CD4-positive, alpha-beta memory T cell (primary cell): ENCODE measurements at regions of chr7 and their contacts with region 1.

Region 1: GRCh38 chr7:135170274-135170997 is at the start of gene CYREN:
- DNase-seq: peak; percentile 79 to 88 (median 84)
- H3K4me3 ChIP-seq: peak within 1 kb of the TSS; percentile 19 to 79
- H3K4me3 Mint-ChIP-seq: peak within 1 kb of the TSS; percentile 89 to 95 (median 90)
- H3K27ac ChIP-seq: peak within 1 kb of the TSS; percentile 93
- H3K27ac Mint-ChIP-seq: peak within 1 kb of the TSS; percentile 94 to 97 (median 97)
- H3K4me1 ChIP-seq: peaks cover 43% of the 10 kb centered on the region
- H3K4me1 Mint-ChIP-seq: peaks cover 35 to 57% (median 45%) of the 10 kb centered on the region in 4 donors
- H3K27me3 ChIP-seq: no peaks in the 10 kb centered on the region
- H3K27me3 Mint-ChIP-seq: no peaks in the 10 kb centered on the region
- total RNA-seq, gene CYREN: 45.3 to 46.5 TPM

Region 2: DNA sequence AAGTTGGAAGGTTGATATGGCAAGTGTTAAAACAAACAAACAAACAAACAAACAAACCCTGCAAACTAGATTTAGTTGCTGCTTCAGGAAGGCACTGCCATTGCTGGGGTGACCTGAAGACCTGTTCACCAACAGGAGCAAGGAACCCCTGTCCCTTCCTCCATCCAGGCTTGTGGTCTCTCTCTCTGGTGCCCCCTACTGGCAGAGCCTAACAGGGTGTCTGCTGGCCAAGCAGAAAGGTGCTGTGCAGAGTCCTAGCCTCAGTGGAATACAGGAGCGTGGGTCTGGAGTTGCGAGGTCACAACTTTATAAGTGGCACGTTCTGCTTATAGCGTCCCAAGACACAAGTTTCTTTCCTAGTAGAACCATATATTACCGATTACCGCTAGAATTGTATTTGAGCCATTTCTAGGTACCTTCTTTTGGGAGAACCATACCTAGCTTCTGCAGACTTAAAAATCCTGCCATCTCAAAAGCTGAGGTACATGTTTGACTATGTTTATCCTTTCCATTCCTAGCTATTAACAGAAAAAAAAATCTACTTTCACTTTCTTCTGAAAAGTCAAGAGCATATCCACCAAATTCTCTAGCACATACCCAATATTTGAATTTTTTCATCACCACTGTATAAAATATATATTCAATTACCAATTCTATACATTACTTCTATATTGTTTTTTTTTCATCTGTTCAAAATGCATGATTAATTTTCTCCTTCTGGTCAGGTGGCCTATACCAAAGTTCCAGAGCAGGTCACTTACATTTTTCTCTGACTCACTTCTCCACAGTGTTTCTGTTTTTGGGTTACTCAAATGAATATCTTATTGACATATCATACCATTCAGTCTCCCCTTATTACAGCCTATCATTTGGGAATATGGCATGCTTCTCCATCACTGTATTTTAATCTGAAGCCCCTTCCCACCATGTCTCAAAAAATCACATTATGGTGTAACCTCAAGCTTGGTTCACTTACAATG is 420.1 kb before region 1 on chr7:
- CTCF ChIA-PET with region 1: interaction called, 7 read pairs
- POLR2A ChIA-PET with region 1: interaction called, 3 read pairs
- intact Hi-C with region 1: loop called (anchors 1 kb)
- DNase-seq: peak; percentile 40 to 64 (median 52)
- H3K4me3 ChIP-seq: no peak overlapping the region
- H3K4me3 Mint-ChIP-seq: no peak overlapping the region
- H3K27ac ChIP-seq: no peak overlapping the region
- H3K27ac Mint-ChIP-seq: no peak overlapping the region
- H3K4me1 ChIP-seq: no peaks in the 10 kb centered on the region
- H3K4me1 Mint-ChIP-seq: no peaks in the 10 kb centered on the region
- H3K27me3 ChIP-seq: no peaks in the 10 kb centered on the region
- H3K27me3 Mint-ChIP-seq: peaks cover 0 to 2% of the 10 kb centered on the region in 2 donors

Region 3: DNA sequence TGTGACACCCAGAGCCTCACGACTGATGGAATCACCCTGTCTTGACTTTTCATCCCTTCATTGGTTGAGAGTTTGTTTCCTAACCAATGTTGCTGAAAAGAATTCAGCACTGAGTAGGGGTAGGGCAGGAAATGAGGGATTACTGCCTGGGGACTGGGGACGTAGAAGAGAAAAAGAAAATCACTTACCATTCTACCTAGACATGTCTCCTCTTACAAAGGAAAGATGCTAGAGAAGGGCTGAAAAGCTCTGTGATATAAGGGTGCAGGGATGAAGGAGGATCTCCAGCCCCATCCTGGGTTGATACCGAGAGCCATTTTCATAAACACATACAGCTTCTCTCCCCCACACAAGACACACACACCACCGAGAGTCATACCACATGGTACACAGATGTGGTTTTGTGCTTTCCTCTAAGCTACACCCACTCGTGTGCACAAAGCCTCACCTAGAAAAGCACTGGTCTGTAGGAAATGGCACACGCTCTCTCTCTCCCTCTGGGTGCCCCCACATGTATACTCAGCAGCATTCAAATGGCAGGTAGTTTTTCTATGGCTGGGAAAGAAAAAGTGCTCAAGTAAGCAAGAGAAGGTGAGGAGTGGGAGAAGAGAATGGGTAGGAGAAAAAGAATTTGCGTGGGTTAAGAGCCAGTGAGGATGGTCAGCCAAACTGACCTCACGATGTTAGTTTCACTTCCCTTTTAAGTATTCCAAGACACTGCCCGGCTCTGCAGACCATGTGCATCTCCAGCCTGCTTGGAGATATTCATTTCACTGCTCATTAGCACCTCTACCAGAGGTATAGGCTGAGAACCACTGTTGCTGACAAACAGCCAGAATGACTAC is 305.2 kb before region 1 on chr7:
- CTCF ChIA-PET with region 1: no interaction called
- POLR2A ChIA-PET with region 1: interaction called, 4 read pairs
- intact Hi-C with region 1: loop called (anchors 5 kb)
- DNase-seq: peak; percentile 39 to 60 (median 48)
- H3K4me3 ChIP-seq: peak overlapping the region in 1 of 2 donors; percentile 32
- H3K4me3 Mint-ChIP-seq: peak overlapping the region; percentile 73 to 88 (median 80)
- H3K27ac ChIP-seq: no peak overlapping the region
- H3K27ac Mint-ChIP-seq: peak overlapping the region; percentile 58 to 91 (median 90)
- H3K4me1 ChIP-seq: peaks cover 12% of the 10 kb centered on the region
- H3K4me1 Mint-ChIP-seq: peaks cover 16 to 30% (median 20%) of the 10 kb centered on the region in 4 donors
- H3K27me3 ChIP-seq: no peaks in the 10 kb centered on the region
- H3K27me3 Mint-ChIP-seq: peaks cover 0 to 4% of the 10 kb centered on the region in 2 donors

Region 4: GRCh38 chr7:134986363-134987251 is 183.8 kb before region 1 on chr7 and contains the start of gene AGBL3:
- CTCF ChIA-PET with region 1: interaction called, 162 read pairs
- POLR2A ChIA-PET with region 1: interaction called, 65 read pairs
- intact Hi-C with region 1: loop called (anchors 1 kb)
- DNase-seq: peak; percentile 87 to 91 (median 88)
- H3K4me3 ChIP-seq: peak within 1 kb of the TSS; percentile 60 to 86
- H3K4me3 Mint-ChIP-seq: peak within 1 kb of the TSS; percentile 96 to 99 (median 98)
- H3K27ac ChIP-seq: peak within 1 kb of the TSS; percentile 80
- H3K27ac Mint-ChIP-seq: peak within 1 kb of the TSS; percentile 98 to 100 (median 98)
- H3K4me1 ChIP-seq: peaks cover 20% of the 10 kb centered on the region
- H3K4me1 Mint-ChIP-seq: peaks cover 26 to 41% (median 31%) of the 10 kb centered on the region in 4 donors
- H3K27me3 ChIP-seq: no peaks in the 10 kb centered on the region
- H3K27me3 Mint-ChIP-seq: no peaks in the 10 kb centered on the region
- total RNA-seq, gene AGBL3: 5.5 to 6.2 TPM

Region 5: GRCh38 chr7:135160098-135160857 is 10.2 kb before region 1 on chr7:
- CTCF ChIA-PET with region 1: interaction called, 54 read pairs
- POLR2A ChIA-PET with region 1: interaction called, 59 read pairs
- intact Hi-C with region 1: no loop called
- DNase-seq: no peak
- H3K4me3 ChIP-seq: no peak overlapping the region
- H3K4me3 Mint-ChIP-seq: peak overlapping the region in 3 of 8 donors; percentile 40 to 76 (median 55)
- H3K27ac ChIP-seq: no peak overlapping the region
- H3K27ac Mint-ChIP-seq: peak overlapping the region; percentile 24 to 85 (median 74)
- H3K4me1 ChIP-seq: peaks cover 39% of the 10 kb centered on the region
- H3K4me1 Mint-ChIP-seq: peaks cover 26 to 69% (median 52%) of the 10 kb centered on the region in 4 donors
- H3K27me3 ChIP-seq: no peaks in the 10 kb centered on the region
- H3K27me3 Mint-ChIP-seq: no peaks in the 10 kb centered on the region